Ascending aorta (tissue), 2 donors: ENCODE measurements at regions of chr9 and their contacts with region 1.

Region 1: GRCh38 chr9:73183917-73184861 is 32.5 kb downstream of the ANXA1 start:
- DNase-seq: no peak
- H3K4me3 ChIP-seq: no peak overlapping the region
- H3K27ac ChIP-seq: no peak overlapping the region
- H3K4me1 ChIP-seq: peaks cover 0 to 10% of the 10 kb centered on the region in 2 donors
- H3K27me3 ChIP-seq: no peaks in the 10 kb centered on the region
- CTCF ChIP-seq: peak; percentile 38 to 59 (median 51)

Region 2: GRCh38 chr9:72863456-72864094 is 320.6 kb before region 1 on chr9:
- intact Hi-C with region 1: loop called (anchors 2 kb)
- DNase-seq: no peak
- H3K4me3 ChIP-seq: no peak overlapping the region
- H3K27ac ChIP-seq: no peak overlapping the region
- H3K4me1 ChIP-seq: no peaks in the 10 kb centered on the region
- H3K27me3 ChIP-seq: no peaks in the 10 kb centered on the region
- CTCF ChIP-seq: no peak

Region 3: DNA sequence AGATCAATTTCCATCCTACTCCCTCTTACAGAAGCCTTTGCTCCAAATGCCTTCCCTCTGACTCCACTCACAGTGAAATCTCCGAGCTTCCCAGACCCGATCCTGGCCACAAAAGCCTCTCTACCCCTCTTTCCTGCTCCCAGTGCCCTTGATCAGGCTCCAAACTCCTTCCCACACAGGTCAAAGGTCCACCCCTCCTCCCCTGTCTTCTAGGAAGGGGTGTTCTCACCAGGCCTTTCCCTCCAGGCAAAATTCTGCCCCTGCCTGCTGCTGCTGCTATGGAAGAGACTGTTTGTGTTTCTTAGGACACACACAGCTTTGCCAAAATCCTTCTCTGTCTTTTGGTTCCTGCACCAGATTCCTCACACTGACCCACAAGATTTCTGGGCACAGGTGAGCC is 145.6 kb before region 1 on chr9:
- intact Hi-C with region 1: loop called (anchors 5 kb)
- DNase-seq: peak; percentile 10 to 73
- H3K4me3 ChIP-seq: peak overlapping the region in 1 of 2 donors; percentile 15
- H3K27ac ChIP-seq: peak overlapping the region; percentile 74 to 87
- H3K4me1 ChIP-seq: peaks cover 0 to 24% of the 10 kb centered on the region in 2 donors
- H3K27me3 ChIP-seq: no peaks in the 10 kb centered on the region
- CTCF ChIP-seq: no peak

Region 4: GRCh38 chr9:73104342-73104741 is 79.8 kb before region 1 on chr9:
- intact Hi-C with region 1: loop called (anchors 1 kb)
- DNase-seq: no peak
- H3K4me3 ChIP-seq: no peak overlapping the region
- H3K27ac ChIP-seq: no peak overlapping the region
- H3K4me1 ChIP-seq: no peaks in the 10 kb centered on the region
- H3K27me3 ChIP-seq: no peaks in the 10 kb centered on the region
- CTCF ChIP-seq: no peak